Naive thymus-derived CD8-positive, alpha-beta T cell (primary cell): ENCODE measurements at regions of chr16 and their contacts with region 1.

Region 1: DNA sequence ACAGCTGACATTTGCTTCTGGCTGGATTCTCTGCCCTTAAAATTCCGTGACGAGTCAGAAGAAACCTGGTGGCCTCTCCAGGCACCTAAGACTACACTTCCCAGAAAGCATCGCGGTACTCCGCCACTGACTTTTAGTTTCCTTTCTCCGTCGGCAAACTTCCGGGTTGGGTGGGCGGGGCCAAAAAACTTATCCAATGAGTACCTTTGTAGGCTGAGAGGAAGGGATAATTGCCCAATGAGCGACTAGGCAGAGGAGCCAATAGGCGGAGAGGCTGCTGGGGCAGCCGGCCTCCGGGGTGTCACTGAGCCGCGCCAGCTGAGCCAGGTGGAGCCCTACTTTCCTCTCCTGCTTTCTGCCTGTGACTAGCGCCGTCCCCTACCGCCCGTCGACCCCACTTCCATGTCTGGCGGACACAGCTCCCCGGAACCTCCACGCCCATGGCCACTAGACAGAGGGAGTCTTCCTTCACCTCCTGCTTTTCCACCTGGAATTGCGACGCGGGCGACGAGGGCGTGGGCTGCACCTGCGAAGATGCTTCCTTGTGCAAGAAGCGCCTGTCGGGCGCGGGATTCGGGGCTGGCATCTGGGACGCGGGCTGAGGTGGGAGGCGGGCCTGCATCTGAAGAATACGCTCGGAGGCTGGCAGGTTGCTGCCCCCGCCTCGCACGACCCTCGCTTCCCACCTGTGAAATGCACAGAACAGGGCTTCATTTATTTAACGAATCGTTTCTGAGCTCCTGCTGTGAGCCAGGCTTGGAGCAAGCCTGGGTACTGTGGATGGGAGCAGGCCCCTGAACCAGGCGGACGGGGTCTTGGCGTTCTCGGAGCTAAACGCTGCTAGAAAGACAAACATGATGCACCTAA is 16.5 kb upstream of the ARHGAP17 start:
- DNase-seq: peak; percentile 81 to 95 (median 91)
- ATAC-seq: peak; percentile 100
- H3K4me3 Mint-ChIP-seq: peak overlapping the region; percentile 84 to 99 (median 96)
- H3K27ac Mint-ChIP-seq: peak overlapping the region; percentile 36 to 97 (median 88)
- H3K4me1 Mint-ChIP-seq: peaks cover 34 to 46% (median 35%) of the 10 kb centered on the region in 4 donors
- H3K27me3 Mint-ChIP-seq: no peaks in the 10 kb centered on the region

Region 2: GRCh38 chr16:25020112-25020631 is 11.5 kb before region 1 on chr16:
- POLR2A ChIA-PET with region 1: interaction called, 33 read pairs
- DNase-seq: no peak
- ATAC-seq: no peak
- H3K4me3 Mint-ChIP-seq: peak overlapping the region; percentile 29 to 85 (median 68)
- H3K27ac Mint-ChIP-seq: peak overlapping the region in 9 of 10 donors; percentile 41 to 91 (median 80)
- H3K4me1 Mint-ChIP-seq: peaks cover 17 to 57% (median 43%) of the 10 kb centered on the region in 4 donors
- H3K27me3 Mint-ChIP-seq: no peaks in the 10 kb centered on the region